ENCODE measurements at regions of chr2 and their contacts with region 1.

Region 1: DNA sequence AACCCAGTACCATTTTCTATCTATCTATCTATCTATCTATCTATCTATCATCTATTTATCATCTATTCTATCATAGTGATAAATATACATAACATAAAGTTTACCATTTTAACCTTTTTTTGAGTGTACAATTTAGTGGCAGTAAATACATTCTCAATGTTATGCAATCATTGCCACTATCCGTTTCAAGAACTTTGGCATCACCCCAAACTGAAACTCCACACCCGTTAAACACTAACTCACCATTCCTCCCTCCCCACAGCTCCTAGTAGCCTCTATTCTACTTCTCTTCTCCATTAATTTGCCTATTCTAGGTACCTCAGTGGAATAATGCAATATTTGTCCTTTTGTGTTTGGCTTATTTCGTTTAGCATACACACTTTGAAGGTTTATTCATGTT is 82.5 kb upstream of the KCNE4 start:
- DNase-seq: no peak
- ATAC-seq: no peak
- H3K4me3 Mint-ChIP-seq: no peak overlapping the region
- H3K27ac Mint-ChIP-seq: no peak overlapping the region
- H3K4me1 Mint-ChIP-seq: no peaks in the 10 kb centered on the region
- H3K27me3 Mint-ChIP-seq: no peaks in the 10 kb centered on the region

Region 2: GRCh38 chr2:221981903-221982470 is 987.5 kb before region 1 on chr2:
- CTCF ChIA-PET with region 1: no interaction called
- POLR2A ChIA-PET with region 1: no interaction called
- intact Hi-C with region 1: no loop called
- DNase-seq: no peak
- ATAC-seq: no peak
- H3K4me3 Mint-ChIP-seq: no peak overlapping the region
- H3K27ac Mint-ChIP-seq: no peak overlapping the region
- H3K4me1 Mint-ChIP-seq: no peaks in the 10 kb centered on the region
- H3K27me3 Mint-ChIP-seq: peaks cover 5% of the 10 kb centered on the region

Region 3: DNA sequence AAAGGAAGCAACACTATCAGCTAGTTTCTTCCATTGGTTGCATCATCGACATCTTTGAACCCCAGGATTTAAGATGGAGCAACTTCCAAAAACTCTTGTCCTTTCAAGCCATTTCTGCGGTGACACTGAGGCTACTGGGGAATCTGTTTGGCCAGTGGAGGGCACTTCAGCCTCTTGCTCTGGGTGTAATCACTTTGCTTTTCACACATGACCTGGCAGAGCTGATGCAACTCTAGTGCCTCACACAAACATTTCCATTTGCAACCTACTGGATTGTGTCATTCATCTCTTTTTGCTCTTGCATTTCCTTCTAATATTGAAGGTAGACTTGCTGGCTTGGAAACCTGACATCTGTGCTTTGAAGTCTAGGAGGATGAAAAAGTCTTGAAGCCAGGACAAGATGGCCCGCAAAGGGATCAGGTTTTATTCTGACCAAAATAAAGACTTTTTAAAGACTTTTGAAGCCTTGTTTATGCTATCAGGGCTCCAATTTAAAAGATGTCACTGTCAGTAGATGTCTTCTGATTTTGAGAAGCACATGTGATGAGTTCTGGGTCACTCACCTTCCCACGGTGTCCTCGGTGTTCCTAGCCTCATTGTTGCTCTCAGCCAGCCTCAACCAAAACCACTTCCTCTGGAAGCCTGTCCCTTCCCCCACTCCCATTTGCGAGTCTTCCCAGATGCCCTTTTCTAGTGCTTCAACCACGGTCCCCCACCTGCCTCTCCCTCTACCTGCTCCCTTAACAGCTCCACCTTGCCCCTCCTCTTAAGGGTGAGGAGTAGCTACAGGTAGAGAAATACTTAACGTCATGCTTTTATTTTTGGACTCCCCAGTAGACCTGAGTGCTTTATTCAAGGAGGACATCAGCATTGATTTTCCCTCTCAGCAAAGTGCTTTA is 12.8 kb after region 1 on chr2:
- CTCF ChIA-PET with region 1: interaction called, 11 read pairs
- POLR2A ChIA-PET with region 1: no interaction called
- intact Hi-C with region 1: no loop called
- DNase-seq: peak; percentile 36
- ATAC-seq: peak; percentile 49
- H3K4me3 Mint-ChIP-seq: no peak overlapping the region
- H3K27ac Mint-ChIP-seq: peak overlapping the region; percentile 30
- H3K4me1 Mint-ChIP-seq: peaks cover 8% of the 10 kb centered on the region
- H3K27me3 Mint-ChIP-seq: peaks cover 19% of the 10 kb centered on the region

Region 4: GRCh38 chr2:223101340-223102039 is 132.0 kb after region 1 on chr2:
- CTCF ChIA-PET with region 1: interaction called, 4 read pairs
- POLR2A ChIA-PET with region 1: no interaction called
- intact Hi-C with region 1: loop called (anchors 2 to 5 kb)
- DNase-seq: no peak
- ATAC-seq: no peak
- H3K4me3 Mint-ChIP-seq: no peak overlapping the region
- H3K27ac Mint-ChIP-seq: no peak overlapping the region
- H3K4me1 Mint-ChIP-seq: no peaks in the 10 kb centered on the region
- H3K27me3 Mint-ChIP-seq: peaks cover 3% of the 10 kb centered on the region

Region 5: DNA sequence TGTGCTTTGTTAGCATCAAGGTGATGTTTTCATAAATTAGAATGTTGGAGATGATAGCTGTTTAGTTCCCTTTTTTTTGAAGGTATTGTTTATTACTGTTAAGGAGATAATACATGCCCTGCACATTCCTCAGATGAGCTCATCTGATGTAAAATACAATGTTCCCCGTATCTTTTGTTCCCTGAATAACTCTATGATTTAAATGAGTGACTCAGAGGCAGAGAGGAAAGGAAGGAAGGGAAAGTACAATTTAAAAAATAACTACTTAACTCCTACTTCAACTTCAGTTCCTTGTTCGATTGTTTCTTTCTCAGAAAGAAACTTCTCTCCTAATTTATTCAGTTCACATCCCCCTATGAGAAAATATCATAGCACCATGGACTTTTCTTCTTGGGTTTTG is 291.2 kb after region 1 on chr2:
- CTCF ChIA-PET with region 1: no interaction called
- POLR2A ChIA-PET with region 1: no interaction called
- intact Hi-C with region 1: no loop called
- DNase-seq: no peak
- ATAC-seq: no peak
- H3K4me3 Mint-ChIP-seq: no peak overlapping the region
- H3K27ac Mint-ChIP-seq: no peak overlapping the region
- H3K4me1 Mint-ChIP-seq: no peaks in the 10 kb centered on the region
- H3K27me3 Mint-ChIP-seq: no peaks in the 10 kb centered on the region